GM10248 (cell line): ENCODE measurements at regions of chr16 and their contacts with region 1.

Region 1: GRCh38 chr16:67115639-67116038 is 5.9 kb downstream of the PHAF1 start:
- DNase-seq: no peak
- CTCF ChIP-seq: no peak

Region 2: GRCh38 chr16:67028555-67029248 is 86.9 kb before region 1 on chr16 and contains the start of gene CBFB:
- CTCF ChIA-PET with region 1: no interaction called
- POLR2A ChIA-PET with region 1: interaction called, 13 read pairs
- DNase-seq: peak; percentile 98
- CTCF ChIP-seq: no peak